T-cell (primary cell): ENCODE measurements at regions of chr13 and their contacts with region 1.

Region 1: GRCh38 chr13:40597740-40598370 is 68.6 kb downstream of the FOXO1 start:
- DNase-seq: no peak
- ATAC-seq: no peak
- H3K4me3 ChIP-seq: no peak overlapping the region
- H3K4me3 Mint-ChIP-seq: peak overlapping the region; percentile 26 to 68 (median 40)
- H3K27ac ChIP-seq: no peak overlapping the region
- H3K27ac Mint-ChIP-seq: peak overlapping the region; percentile 53 to 88
- H3K4me1 ChIP-seq: peaks cover 54 to 62% of the 10 kb centered on the region in 2 experiments
- H3K4me1 Mint-ChIP-seq: peaks cover 95 to 98% (median 98%) of the 10 kb centered on the region in 3 donors
- H3K27me3 ChIP-seq: no peaks in the 10 kb centered on the region
- H3K27me3 Mint-ChIP-seq: no peaks in the 10 kb centered on the region

Region 2: GRCh38 chr13:40549500-40550094 is 48.3 kb before region 1 on chr13:
- CTCF ChIA-PET with region 1: no interaction called
- POLR2A ChIA-PET with region 1: no interaction called
- DNase-seq: no peak
- ATAC-seq: no peak
- H3K4me3 ChIP-seq: no peak overlapping the region
- H3K4me3 Mint-ChIP-seq: no peak overlapping the region
- H3K27ac ChIP-seq: no peak overlapping the region
- H3K27ac Mint-ChIP-seq: peak overlapping the region in 1 of 2 donors; percentile 71
- H3K4me1 ChIP-seq: peaks cover 0 to 2% of the 10 kb centered on the region in 2 experiments
- H3K4me1 Mint-ChIP-seq: peaks cover 46 to 62% (median 49%) of the 10 kb centered on the region in 3 donors
- H3K27me3 ChIP-seq: no peaks in the 10 kb centered on the region
- H3K27me3 Mint-ChIP-seq: no peaks in the 10 kb centered on the region

Region 3: GRCh38 chr13:40671956-40672764 is 74.3 kb after region 1 on chr13:
- CTCF ChIA-PET with region 1: no interaction called
- POLR2A ChIA-PET with region 1: interaction called in 1 of 2 experiments, 10 read pairs
- DNase-seq: no peak
- ATAC-seq: no peak
- H3K4me3 ChIP-seq: no peak overlapping the region
- H3K4me3 Mint-ChIP-seq: no peak overlapping the region
- H3K27ac ChIP-seq: no peak overlapping the region
- H3K27ac Mint-ChIP-seq: peak overlapping the region in 1 of 2 donors; percentile 10
- H3K4me1 ChIP-seq: peaks cover 6 to 13% of the 10 kb centered on the region in 2 experiments
- H3K4me1 Mint-ChIP-seq: peaks cover 13 to 40% (median 36%) of the 10 kb centered on the region in 3 donors
- H3K27me3 ChIP-seq: no peaks in the 10 kb centered on the region
- H3K27me3 Mint-ChIP-seq: no peaks in the 10 kb centered on the region

Region 4: DNA sequence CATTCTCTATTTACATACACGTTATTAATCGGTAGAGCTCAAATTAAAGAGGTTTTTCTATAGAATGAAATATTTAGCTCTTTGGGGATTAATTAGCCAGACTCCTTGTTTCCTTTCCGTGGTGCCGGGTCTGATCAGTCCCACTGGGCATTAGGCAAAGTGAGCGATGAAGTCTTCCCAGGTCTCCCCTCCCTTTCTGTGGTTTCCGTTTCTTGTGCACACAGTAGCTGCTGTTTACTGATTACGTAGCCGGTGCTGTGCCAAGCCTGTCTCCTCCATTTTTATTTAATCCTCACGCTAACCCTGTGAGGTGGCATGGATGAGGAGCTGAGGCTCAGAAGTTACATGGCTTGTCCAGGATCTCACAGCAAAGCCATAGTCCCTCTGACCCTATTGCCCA is 200.5 kb after region 1 on chr13:
- CTCF ChIA-PET with region 1: no interaction called
- POLR2A ChIA-PET with region 1: no interaction called
- DNase-seq: peak in 9 of 35 experiments; percentile 6 to 48 (median 13)
- ATAC-seq: peak; percentile 48 to 81 (median 70)
- H3K4me3 ChIP-seq: peak overlapping the region in 1 of 2 donors; percentile 19
- H3K4me3 Mint-ChIP-seq: peak overlapping the region; percentile 53 to 64 (median 59)
- H3K27ac ChIP-seq: peak overlapping the region; percentile 44
- H3K27ac Mint-ChIP-seq: peak overlapping the region; percentile 78 to 91
- H3K4me1 ChIP-seq: peaks cover 0 to 6% of the 10 kb centered on the region in 2 experiments
- H3K4me1 Mint-ChIP-seq: peaks cover 9 to 18% (median 18%) of the 10 kb centered on the region in 3 donors
- H3K27me3 ChIP-seq: no peaks in the 10 kb centered on the region
- H3K27me3 Mint-ChIP-seq: no peaks in the 10 kb centered on the region

Region 5: GRCh38 chr13:40984668-40985366 is 387.0 kb after region 1 on chr13:
- CTCF ChIA-PET with region 1: no interaction called
- POLR2A ChIA-PET with region 1: interaction called in 1 of 2 experiments, 11 read pairs
- DNase-seq: peak in 1 of 35 experiments; percentile 73
- ATAC-seq: peak; percentile 39 to 54 (median 46)
- H3K4me3 ChIP-seq: peak overlapping the region; percentile 39 to 45
- H3K4me3 Mint-ChIP-seq: peak overlapping the region; percentile 79 to 96 (median 85)
- H3K27ac ChIP-seq: peak overlapping the region; percentile 94
- H3K27ac Mint-ChIP-seq: peak overlapping the region; percentile 93 to 98
- H3K4me1 ChIP-seq: peaks cover 27 to 47% of the 10 kb centered on the region in 2 experiments
- H3K4me1 Mint-ChIP-seq: peaks cover 56 to 72% (median 70%) of the 10 kb centered on the region in 3 donors
- H3K27me3 ChIP-seq: no peaks in the 10 kb centered on the region
- H3K27me3 Mint-ChIP-seq: no peaks in the 10 kb centered on the region

Region 6: DNA sequence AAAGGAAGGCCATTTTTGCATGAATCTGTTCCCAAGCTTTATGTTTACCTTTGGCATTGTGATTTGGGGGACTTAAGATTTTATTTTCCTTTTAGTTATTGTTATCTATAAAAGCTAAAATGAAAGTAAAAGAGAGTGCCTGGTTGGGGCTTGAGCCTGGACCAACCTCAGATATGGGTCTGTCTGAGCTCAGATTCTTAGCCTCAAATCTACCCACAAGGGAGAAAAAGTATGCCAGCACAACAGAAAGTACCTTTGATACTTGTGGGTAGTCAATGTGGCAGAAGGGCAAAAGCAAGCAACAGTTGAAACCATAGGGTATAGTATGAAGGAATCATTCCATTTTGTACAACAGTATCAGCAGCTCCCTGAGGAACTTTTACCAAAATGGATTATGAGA is 561.3 kb after region 1 on chr13:
- CTCF ChIA-PET with region 1: no interaction called
- POLR2A ChIA-PET with region 1: no interaction called
- DNase-seq: no peak
- ATAC-seq: no peak
- H3K4me3 ChIP-seq: no peak overlapping the region
- H3K4me3 Mint-ChIP-seq: no peak overlapping the region
- H3K27ac ChIP-seq: no peak overlapping the region
- H3K27ac Mint-ChIP-seq: peak overlapping the region in 1 of 2 donors; percentile 46
- H3K4me1 ChIP-seq: no peaks in the 10 kb centered on the region
- H3K4me1 Mint-ChIP-seq: peaks cover 0 to 5% (median 3%) of the 10 kb centered on the region in 3 donors
- H3K27me3 ChIP-seq: no peaks in the 10 kb centered on the region
- H3K27me3 Mint-ChIP-seq: no peaks in the 10 kb centered on the region